Left ventricle myocardium inferior (tissue), 1 donor: ENCODE measurements at regions of chr20 and their contacts with region 1.

Region 1: GRCh38 chr20:57514273-57514751 is 10.6 kb downstream of the CTCFL start:
- DNase-seq: peak; percentile 45
- H3K4me3 ChIP-seq: no peak overlapping the region
- H3K27ac ChIP-seq: no peak overlapping the region
- H3K4me1 ChIP-seq: no peaks in the 10 kb centered on the region
- H3K27me3 ChIP-seq: peaks cover 30% of the 10 kb centered on the region
- CTCF ChIP-seq: peak; percentile 85

Region 2: GRCh38 chr20:58209652-58210397 is 695.5 kb after region 1 on chr20:
- intact Hi-C with region 1: loop called (anchors 5 kb)
- DNase-seq: peak; percentile 82
- H3K4me3 ChIP-seq: no peak overlapping the region
- H3K27ac ChIP-seq: no peak overlapping the region
- H3K4me1 ChIP-seq: no peaks in the 10 kb centered on the region
- H3K27me3 ChIP-seq: peaks cover 42% of the 10 kb centered on the region
- CTCF ChIP-seq: peak; percentile 100